ENCODE measurements at regions of chr5 and their contacts with region 1.

Region 1: GRCh38 chr5:107389130-107389774 is 281.5 kb downstream of the EFNA5 start:
- DNase-seq: peak; percentile 96
- H3K4me3 ChIP-seq: peak overlapping the region; percentile 53
- H3K27ac ChIP-seq: peak overlapping the region; percentile 97
- H3K4me1 ChIP-seq: peaks cover 80% of the 10 kb centered on the region
- CTCF ChIP-seq: peak; percentile 54; the same call in 1 of the 2 replicates

Region 2: GRCh38 chr5:107253246-107253645 is 136.0 kb before region 1 on chr5:
- CTCF ChIA-PET with region 1: no interaction called
- POLR2A ChIA-PET with region 1: no interaction called
- intact Hi-C with region 1: loop called (anchors 5 kb)
- DNase-seq: no peak
- H3K4me3 ChIP-seq: no peak overlapping the region
- H3K27ac ChIP-seq: no peak overlapping the region
- H3K4me1 ChIP-seq: peaks cover 8% of the 10 kb centered on the region
- CTCF ChIP-seq: no peak

Region 3: DNA sequence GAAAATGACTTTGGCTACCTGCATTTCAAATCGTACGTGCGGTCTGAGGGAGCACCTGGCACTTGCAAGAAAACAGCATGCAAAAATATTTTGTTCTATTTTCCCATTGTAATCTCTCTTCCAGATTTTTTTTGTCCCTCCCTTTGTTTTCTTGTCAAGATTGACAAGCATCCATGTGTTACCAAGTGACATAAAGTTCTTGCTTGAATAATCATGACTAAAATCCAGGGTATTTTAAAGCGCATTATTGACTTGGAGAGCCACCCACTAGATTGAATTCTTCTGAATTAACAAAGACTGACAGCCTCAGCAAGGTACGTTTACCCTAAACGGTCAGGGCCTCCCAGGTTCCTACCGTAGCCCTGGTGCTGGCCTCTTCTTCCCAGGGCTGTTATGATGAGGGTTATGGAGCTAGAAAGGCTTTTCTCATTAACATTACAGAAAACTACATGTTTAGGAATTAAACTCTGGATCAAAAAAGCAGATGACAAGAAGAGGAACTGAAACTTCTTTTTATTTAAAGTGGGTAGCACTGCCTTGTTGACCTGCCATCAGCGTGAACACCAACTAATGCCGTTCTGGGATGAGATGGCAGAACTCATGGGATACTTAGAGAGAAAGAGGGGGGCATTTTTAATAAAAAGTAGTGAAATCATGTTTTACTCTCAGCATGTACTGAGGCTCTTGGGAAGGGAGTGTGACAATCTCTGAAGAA is 15.5 kb before region 1 on chr5:
- CTCF ChIA-PET with region 1: no interaction called
- POLR2A ChIA-PET with region 1: interaction called, 12 read pairs
- intact Hi-C with region 1: loop called (anchors 1 kb)
- DNase-seq: peak; percentile 81
- H3K4me3 ChIP-seq: peak overlapping the region; percentile 51
- H3K27ac ChIP-seq: peak overlapping the region; percentile 69
- H3K4me1 ChIP-seq: peaks cover 63% of the 10 kb centered on the region
- CTCF ChIP-seq: no peak

Region 4: GRCh38 chr5:107437986-107438520 is 48.8 kb after region 1 on chr5:
- CTCF ChIA-PET with region 1: interaction called, 3 read pairs
- POLR2A ChIA-PET with region 1: interaction called, 11 read pairs
- intact Hi-C with region 1: no loop called
- DNase-seq: no peak
- H3K4me3 ChIP-seq: no peak overlapping the region
- H3K27ac ChIP-seq: no peak overlapping the region
- H3K4me1 ChIP-seq: peaks cover 24% of the 10 kb centered on the region
- CTCF ChIP-seq: no peak

Region 5: DNA sequence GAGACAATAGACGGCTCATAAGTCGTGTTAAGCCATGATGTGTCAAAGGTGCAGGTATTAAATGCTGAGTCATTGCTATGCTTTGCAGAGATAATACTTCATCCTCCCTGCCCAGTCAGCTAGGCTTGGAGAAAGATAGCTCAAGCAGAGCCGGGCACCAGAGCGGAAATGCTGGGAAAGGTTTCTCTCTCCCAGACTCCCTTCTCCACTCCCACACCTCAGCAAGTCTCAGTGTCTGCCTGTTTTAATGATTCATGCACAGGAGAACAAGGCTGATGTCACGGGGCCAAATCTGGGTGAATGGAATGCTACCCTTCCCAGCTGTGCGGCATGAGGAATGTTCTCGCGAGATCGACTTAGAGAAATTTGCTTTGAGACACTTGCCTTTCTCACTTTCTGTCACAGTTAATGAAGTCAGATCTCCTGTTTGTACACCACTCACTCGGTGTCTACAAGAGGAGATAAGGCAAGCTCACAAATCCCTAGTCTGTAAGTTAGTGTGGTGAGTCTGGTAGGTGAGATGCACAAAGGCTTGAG is 77.0 kb after region 1 on chr5:
- CTCF ChIA-PET with region 1: interaction called, 4 read pairs
- POLR2A ChIA-PET with region 1: interaction called, 5 read pairs
- intact Hi-C with region 1: loop called (anchors 2 kb)
- DNase-seq: no peak
- H3K4me3 ChIP-seq: no peak overlapping the region
- H3K27ac ChIP-seq: no peak overlapping the region
- H3K4me1 ChIP-seq: peaks cover 78% of the 10 kb centered on the region
- CTCF ChIP-seq: no peak

Region 6: DNA sequence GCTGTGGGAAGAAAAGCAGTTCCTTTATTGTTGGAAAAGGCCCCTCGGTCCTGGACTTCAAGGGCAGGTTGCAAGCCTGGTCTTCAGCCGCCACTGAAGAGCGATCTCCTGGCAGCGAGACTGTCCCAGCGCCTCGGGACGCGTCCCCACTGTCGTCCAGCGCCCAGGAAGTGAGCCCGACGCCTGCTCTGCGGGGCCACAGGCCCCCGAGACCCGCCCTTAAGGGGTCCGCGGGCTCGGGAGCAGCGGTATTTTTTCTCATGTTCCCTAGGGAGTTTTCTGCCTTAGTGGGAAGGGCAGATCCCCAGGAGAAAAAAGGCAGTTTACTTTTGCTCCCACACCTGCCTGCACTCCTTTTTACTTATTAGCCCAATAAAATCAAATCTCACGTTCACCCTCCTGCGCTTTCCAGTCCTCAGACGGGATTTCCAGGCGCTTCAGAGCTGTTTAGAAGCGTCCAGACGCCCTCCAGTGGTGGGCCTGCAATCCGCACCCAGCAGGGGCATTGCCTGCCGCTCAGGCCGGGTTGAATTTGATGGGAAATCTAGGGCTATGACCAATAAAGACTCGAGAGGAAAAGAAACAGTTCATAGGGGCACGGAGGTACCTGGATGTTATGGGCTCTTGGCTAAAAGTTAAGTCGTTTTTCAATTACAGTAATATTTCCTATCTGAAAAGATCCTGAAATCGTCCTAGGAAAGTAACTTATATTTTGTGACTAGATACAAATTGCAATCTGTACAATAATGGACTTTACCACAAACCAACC is 284.3 kb after region 1 on chr5:
- CTCF ChIA-PET with region 1: no interaction called
- POLR2A ChIA-PET with region 1: interaction called, 3 read pairs
- intact Hi-C with region 1: loop called (anchors 1 kb)
- DNase-seq: peak; percentile 93
- H3K4me3 ChIP-seq: peak overlapping the region; percentile 74
- H3K27ac ChIP-seq: peak overlapping the region; percentile 28
- H3K4me1 ChIP-seq: peaks cover 25% of the 10 kb centered on the region
- CTCF ChIP-seq: peak; percentile 99

Measured in OCI-LY7 (cell line).